A673 (cell line): ENCODE measurements at regions of chr1 and their contacts with region 1.

Region 1: DNA sequence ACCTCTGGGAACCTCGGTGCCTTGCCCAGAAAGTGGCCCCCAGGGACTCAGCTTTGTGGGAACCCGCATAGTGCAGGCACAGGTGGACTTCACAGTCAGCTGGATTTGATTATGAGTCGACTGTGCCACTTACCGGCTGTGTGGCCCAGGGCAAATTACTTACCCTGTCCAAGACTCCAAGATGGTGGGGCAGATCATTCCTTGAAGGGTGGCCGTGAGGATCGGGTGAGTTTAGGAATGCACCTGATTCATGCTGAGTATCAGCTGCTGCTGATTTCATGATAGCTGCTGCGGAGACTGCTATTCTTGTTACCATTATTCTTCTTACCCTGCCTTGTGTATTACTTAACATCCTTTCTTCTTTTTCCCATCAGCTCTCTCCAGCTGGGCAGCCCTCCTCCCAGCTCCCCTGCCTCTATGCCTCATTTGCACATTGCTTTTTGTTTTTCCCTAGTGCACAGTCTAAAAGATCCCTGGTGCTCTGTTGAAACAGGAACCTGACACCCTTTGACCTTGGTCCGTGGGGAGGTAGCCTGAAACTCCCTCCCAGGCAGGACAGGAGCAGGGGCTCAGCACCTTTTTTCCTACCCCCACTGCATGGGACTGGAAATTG is 40.5 kb upstream of the FHAD1 start:
- DNase-seq: no peak
- H3K4me3 ChIP-seq: no peak overlapping the region
- H3K27ac ChIP-seq: no peak overlapping the region
- H3K4me1 ChIP-seq: no peaks in the 10 kb centered on the region
- H3K27me3 ChIP-seq: no peaks in the 10 kb centered on the region
- CTCF ChIP-seq: no peak

Region 2: GRCh38 chr1:14923727-14924452 is 282.6 kb before region 1 on chr1:
- CTCF ChIA-PET with region 1: interaction called, 10 read pairs
- POLR2A ChIA-PET with region 1: no interaction called
- intact Hi-C with region 1: no loop called
- DNase-seq: peak; percentile 62
- H3K4me3 ChIP-seq: peak overlapping the region; percentile 58
- H3K27ac ChIP-seq: no peak overlapping the region
- H3K4me1 ChIP-seq: no peaks in the 10 kb centered on the region
- H3K27me3 ChIP-seq: peaks cover 10% of the 10 kb centered on the region
- CTCF ChIP-seq: no peak